ENCODE measurements at regions of chr2 and their contacts with region 1.

Region 1: DNA sequence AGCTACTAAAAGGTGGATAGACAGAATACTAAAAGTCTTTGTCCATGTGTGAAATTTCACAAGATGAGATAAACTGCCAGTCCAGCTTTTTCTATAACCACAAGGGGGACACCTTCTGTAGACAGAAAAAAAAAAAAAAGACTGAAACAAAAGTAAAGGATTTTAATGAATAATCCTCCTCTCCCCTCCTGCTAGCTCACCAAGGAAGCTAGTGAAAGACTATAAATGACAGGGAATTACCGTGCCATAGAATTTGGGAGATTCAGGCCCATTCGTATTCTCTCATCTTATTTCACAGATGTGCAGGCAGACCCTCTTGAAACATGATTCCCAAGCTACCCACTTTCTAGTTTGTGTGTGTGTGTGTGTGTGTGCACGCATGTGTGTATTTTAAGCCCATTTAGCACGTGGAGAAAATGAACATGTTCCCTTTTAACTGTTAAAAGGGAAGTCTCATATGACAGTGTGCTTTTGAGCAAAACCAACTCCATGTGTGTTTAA is 36.3 kb upstream of the SLC8A1 start:
- DNase-seq: no peak
- H3K4me3 ChIP-seq: no peak overlapping the region
- CTCF ChIP-seq: no peak

Region 2: GRCh38 chr2:40510304-40510703 is 22.2 kb after region 1 on chr2:
- CTCF ChIA-PET with region 1: interaction called, 13 read pairs
- POLR2A ChIA-PET with region 1: no interaction called
- DNase-seq: no peak
- H3K4me3 ChIP-seq: no peak overlapping the region
- CTCF ChIP-seq: no peak

Region 3: DNA sequence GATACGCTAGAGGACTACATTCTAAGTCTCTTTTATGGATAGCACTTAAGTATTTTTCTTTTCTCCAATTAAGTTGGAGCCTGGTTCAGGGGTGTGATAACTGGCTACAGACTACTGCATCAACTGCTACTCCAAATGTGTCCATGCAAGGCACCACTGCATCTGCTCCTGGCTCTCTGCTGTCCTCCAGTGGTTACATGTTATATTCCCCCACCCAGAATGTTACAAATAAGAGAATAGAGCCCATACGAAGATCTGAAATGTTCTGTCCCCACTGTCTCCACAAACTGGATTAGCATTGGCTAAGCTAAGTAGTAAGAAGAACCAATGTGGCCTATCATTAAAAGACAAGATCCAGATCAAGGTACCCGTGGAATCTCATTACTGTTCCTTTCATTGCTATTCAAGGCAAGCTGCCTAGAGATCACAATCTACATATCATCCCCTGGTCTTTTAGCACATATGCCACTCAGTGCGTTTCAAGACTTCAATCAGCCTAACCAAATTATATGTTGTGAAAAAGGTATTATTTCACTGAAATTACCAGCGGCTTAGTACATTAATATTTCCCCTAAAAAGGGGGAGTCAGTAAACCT is 272.0 kb after region 1 on chr2:
- CTCF ChIA-PET with region 1: interaction called, 15 read pairs
- POLR2A ChIA-PET with region 1: no interaction called
- DNase-seq: peak; percentile 21
- H3K4me3 ChIP-seq: no peak overlapping the region
- CTCF ChIP-seq: peak; percentile 81

Region 4: GRCh38 chr2:40896358-40896757 is 408.2 kb after region 1 on chr2:
- CTCF ChIA-PET with region 1: no interaction called
- POLR2A ChIA-PET with region 1: no interaction called
- DNase-seq: no peak
- H3K4me3 ChIP-seq: no peak overlapping the region
- CTCF ChIP-seq: no peak